GM18951 (cell line): ENCODE measurements at regions of chr4 and their contacts with region 1.

Region 1: GRCh38 chr4:4488405-4489404 is 53.1 kb downstream of the STX18 start:
- POLR2A ChIP-seq: no peak

Region 2: DNA sequence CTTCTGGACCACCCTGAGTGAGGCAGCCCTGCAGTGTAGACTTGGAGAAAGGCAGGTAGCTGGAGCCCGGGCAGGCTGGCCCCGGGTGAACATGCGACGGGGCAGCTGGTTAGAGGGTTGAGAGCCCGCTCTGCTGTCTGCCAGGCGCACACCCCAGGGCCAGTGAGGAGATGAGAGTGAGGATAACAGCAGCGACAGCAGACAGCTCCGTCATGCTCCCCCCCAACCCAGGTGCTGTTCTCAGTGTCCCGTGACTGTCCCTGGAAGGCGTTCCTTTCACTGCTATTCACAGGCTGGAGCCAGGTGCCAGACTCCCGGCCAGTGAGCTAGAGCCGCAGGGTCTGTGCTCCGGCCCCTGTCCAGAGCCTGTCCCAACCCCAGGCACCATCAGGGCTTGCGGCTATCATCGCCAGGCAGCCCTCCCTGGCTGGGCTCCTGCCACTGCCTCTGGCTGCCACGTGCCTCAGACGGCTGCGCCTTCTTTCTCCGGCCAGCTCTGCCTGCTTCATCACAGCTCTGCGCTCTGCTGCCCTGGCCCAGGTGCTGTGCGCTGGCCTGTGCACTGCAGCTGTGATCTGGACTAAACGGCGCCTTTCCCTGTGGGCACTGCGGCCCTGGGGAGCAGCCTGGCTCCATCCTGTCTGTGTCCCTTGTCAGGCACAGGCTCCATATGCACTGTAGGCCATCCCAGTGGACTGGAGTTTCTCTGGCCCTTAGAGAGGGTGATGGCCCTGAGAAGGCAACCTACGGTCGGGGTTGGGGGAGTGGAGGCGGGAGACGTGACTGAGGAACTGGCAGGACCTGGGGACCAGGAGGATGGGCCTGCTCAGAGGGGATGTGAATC is 82.0 kb before region 1 on chr4:
- in situ Hi-C with region 1: no loop called
- POLR2A ChIP-seq: no peak

Region 3: DNA sequence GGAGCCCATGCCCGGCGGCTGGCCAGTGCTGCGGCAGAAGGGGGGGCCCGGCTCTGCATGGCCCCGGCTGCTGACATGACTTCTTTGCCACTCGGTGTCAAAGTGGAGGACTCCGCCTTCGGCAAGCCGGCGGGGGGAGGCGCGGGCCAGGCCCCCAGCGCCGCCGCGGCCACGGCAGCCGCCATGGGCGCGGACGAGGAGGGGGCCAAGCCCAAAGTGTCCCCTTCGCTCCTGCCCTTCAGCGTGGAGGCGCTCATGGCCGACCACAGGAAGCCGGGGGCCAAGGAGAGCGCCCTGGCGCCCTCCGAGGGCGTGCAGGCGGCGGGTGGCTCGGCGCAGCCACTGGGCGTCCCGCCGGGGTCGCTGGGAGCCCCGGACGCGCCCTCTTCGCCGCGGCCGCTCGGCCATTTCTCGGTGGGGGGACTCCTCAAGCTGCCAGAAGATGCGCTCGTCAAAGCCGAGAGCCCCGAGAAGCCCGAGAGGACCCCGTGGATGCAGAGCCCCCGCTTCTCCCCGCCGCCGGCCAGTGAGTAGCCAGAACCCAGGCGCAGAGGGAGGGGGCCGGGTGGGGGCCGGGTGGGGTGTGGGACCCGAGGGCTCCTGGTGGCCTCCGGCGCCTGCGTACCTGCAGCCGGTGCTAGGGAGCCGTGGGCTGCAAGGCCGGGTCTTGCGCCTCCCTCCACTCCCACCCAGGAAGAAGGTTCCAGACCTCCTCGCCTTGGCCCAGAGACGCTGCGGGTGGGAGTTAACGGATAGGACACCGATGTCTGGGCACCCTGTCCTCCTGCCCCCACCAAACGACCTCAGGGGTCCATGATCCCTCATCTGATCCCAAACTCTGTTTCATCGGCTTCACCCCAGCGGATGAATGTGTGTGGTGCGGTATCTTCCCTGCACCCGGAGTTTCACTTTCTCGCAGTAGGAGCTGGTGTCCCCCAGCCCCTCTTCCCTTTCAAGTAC is 371.4 kb after region 1 on chr4:
- in situ Hi-C with region 1: loop called (anchors 10 kb)
- POLR2A ChIP-seq: no peak

Region 4: DNA sequence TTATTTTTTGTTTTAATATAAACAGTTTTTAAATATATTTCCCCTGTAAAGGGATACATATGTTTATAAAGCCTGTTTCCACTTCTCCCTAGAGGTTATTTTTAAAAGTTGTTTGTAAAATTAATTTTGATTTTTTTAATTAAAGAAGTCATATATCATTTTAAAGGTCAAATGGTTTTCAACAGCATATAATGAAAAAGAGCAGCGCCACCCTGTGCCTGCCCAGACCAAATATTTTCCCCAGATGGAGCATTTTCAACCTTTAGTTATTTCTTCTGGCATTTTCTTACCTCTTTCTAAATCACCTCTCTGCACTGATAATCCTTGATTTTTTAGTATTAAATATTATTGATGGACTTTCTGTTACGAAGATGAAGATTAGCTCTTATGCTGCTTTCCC is 391.8 kb after region 1 on chr4:
- in situ Hi-C with region 1: loop called (anchors 10 kb)
- POLR2A ChIP-seq: no peak

Region 5: GRCh38 chr4:4960574-4960973 is 471.9 kb after region 1 on chr4:
- in situ Hi-C with region 1: no loop called
- POLR2A ChIP-seq: no peak

Region 6: DNA sequence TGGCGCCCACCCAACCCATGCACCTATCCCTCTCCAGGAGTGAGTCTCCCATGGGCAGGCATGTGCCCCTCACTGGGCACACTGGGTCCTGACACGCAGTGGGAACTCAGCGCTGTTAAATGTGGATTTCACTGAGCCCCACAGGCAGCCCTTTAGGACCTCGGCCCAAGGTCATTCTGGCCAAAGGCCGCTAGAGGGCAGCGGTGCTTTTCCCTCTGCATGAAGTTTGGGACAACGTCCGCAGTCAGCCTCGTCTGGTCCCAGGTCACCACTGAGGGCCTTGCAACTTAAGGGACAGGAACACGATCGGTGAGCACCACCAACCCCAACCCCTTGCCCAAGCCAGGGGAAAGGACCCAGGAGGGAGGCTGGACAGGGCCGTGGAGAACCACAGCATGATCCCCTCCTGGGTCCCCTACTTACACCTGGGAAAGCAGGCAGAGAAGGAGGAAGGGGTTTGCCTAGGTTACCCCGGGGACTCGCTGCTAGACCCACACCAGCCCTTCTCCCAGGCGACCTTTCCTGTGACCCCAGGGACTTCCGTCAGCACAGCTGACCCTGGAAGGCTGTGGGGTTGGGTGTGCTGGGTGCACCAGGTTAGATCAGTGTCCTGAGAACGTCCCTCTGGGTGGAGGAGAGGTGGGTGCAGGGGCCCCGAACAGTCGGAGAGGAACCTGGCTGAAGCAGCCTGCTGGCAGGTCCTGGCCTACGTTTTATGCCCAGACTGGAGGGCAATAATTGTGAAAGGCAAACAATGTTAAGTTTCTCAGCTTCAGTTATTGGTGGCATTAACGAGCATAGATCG is 506.6 kb after region 1 on chr4:
- in situ Hi-C with region 1: loop called (anchors 25 kb)
- POLR2A ChIP-seq: no peak